Psoas muscle (tissue), 8 donors: ENCODE measurements at regions of chr4 and their contacts with region 1.

Region 1: GRCh38 chr4:105751718-105752299 is 43.2 kb downstream of the GSTCD start:
- DNase-seq: no peak
- ATAC-seq: no peak
- H3K4me3 ChIP-seq: no peak overlapping the region
- H3K27ac ChIP-seq: no peak overlapping the region
- H3K4me1 ChIP-seq: no peaks in the 10 kb centered on the region
- H3K27me3 ChIP-seq: no peaks in the 10 kb centered on the region
- CTCF ChIP-seq: no peak

Region 2: GRCh38 chr4:105715692-105716278 is 36.0 kb before region 1 on chr4:
- intact Hi-C with region 1: no loop called
- DNase-seq: no peak
- ATAC-seq: peak in 1 of 4 donors; percentile 72
- H3K4me3 ChIP-seq: peak overlapping the region; percentile 6
- H3K27ac ChIP-seq: no peak overlapping the region
- H3K4me1 ChIP-seq: peaks cover 13% of the 10 kb centered on the region
- H3K27me3 ChIP-seq: no peaks in the 10 kb centered on the region
- CTCF ChIP-seq: peak; percentile 63

Region 3: DNA sequence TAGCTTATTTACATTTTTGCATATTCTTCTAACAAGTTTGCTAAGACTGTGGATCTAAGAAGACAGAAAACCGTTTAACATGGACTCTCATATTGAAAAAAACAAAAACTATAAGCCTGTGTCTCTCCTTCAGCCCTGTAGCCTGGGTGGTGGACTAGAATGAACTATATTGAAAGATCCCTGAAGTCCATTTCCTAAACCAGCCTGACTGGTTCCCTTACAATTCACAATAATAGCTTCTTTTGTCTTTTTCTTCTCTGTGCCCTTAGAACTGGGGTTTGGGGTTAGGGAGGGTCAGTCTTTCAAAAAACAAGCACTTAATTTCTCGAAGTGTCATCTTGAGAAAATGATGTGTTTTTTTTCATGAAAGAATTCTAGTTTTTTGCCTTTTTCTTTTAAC is 15.8 kb after region 1 on chr4:
- intact Hi-C with region 1: loop called in 1 of 2 experiments (anchors 1 kb)
- DNase-seq: no peak
- ATAC-seq: no peak
- H3K4me3 ChIP-seq: no peak overlapping the region
- H3K27ac ChIP-seq: no peak overlapping the region
- H3K4me1 ChIP-seq: peaks cover 9% of the 10 kb centered on the region
- H3K27me3 ChIP-seq: no peaks in the 10 kb centered on the region
- CTCF ChIP-seq: no peak